Activated CD4-positive, alpha-beta memory T cell treated with anti-CD3 and anti-CD28 coated beads, Interleukin-2, amount 10 ng/mL, durations not matched to agents 7 days and 5 days (primary cell): ENCODE measurements at regions of chr15 and their contacts with region 1.

Region 1: DNA sequence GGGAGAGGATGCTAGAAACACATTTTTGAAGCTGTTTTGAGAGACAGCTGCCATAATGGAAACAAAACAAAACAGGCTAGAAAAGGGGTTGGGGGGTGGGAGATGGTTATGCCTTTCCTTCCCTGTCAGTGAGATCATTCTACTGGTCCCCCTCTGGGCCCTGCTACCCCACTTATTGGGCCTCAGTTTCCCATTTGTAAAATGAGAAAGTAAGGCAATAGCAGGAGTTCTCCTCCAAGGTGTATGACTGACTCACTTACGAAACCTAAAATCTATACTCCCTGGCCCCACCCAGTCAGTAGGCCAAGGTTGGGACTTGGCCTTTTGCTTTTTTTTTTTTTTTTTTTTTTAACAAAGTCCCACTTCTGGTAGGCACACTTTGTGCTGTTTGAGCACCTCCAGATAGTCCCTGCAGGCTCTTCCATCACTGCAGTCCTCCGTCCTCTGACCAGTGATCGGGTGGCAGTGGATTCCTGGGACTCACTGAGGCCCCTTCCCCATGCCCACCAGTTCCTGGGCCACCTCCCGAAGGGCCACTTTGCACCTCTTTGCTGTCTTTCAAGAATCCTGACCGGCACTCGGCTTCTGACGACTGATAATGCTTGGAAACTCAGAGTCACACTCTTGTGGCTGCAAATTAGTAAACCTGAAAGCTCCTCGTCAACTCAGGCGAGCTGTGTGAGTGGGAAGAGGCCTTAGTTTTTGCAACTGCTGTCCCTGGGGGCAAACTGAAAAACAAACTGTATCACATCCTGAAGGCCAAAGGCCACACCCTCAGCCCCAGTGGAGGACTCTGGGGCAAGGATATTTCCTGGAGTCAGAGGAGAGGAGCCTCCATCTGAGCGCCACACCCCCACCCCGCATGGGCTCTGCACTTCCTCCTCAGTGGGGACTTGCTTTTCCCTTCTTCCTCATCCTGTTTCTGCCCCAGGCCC is 6.7 kb upstream of the PSTPIP1 start:
- DNase-seq: peak; percentile 84
- H3K4me3 Mint-ChIP-seq: peak overlapping the region; percentile 52
- H3K27ac Mint-ChIP-seq: peak overlapping the region; percentile 99
- H3K4me1 Mint-ChIP-seq: peaks cover 69% of the 10 kb centered on the region
- H3K27me3 Mint-ChIP-seq: no peaks in the 10 kb centered on the region

Region 2: GRCh38 chr15:76973362-76973743 is 14.8 kb before region 1 on chr15:
- CTCF ChIA-PET with region 1: interaction called, 19 read pairs
- POLR2A ChIA-PET with region 1: interaction called, 107 read pairs
- DNase-seq: peak; percentile 71
- H3K4me3 Mint-ChIP-seq: no peak overlapping the region
- H3K27ac Mint-ChIP-seq: no peak overlapping the region
- H3K4me1 Mint-ChIP-seq: peaks cover 25% of the 10 kb centered on the region
- H3K27me3 Mint-ChIP-seq: peaks cover 1% of the 10 kb centered on the region

Region 3: DNA sequence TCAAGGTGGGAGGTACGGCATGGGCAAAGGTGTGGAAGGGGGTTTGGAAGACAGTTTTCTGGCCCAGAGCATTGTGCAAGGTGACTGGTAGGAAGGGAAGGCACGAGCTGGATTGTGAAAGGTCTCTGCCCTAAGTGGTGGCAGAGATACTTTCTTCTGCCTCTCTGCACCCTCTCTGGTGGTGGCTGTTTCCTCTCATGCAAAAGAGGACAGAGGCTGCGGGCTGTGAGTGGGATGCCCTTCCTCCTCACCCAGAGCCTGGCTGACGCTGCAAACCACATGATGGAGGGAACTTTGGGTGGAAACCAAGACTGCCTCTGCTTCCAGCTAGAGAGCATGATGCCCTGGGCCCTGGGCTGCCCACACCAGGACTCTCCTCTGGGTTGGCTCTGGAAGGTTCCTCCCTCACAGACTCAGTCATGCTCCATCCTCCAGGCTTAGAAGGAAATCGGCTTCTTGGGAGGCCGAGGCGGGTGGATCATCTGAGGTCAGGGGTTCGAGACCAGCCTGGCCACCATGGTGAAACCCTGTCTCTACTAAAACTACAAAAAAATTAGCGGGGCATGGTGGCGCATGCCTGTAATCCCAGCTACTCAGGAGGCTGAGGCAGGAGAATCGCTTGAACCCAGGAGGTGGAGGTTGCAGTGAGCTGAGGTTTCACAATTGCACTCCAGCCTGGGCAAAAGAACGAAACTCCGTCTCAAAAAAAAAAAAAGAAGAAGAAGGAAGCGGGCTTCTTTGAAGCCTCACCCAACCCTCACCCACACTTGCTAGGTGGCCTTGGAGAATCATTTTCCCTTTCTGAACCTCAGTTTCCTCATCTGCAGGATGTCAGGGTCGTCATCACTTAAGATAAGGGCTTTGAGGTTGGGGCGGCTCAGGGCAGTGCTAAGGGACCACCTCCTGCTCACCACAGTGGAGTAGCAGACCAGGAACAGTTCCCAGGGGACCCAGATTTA is 15.0 kb after region 1 on chr15:
- CTCF ChIA-PET with region 1: interaction called, 20 read pairs
- POLR2A ChIA-PET with region 1: interaction called, 61 read pairs
- DNase-seq: peak; percentile 87
- H3K4me3 Mint-ChIP-seq: peak overlapping the region; percentile 65
- H3K27ac Mint-ChIP-seq: peak overlapping the region; percentile 92
- H3K4me1 Mint-ChIP-seq: peaks cover 87% of the 10 kb centered on the region
- H3K27me3 Mint-ChIP-seq: no peaks in the 10 kb centered on the region

Region 4: DNA sequence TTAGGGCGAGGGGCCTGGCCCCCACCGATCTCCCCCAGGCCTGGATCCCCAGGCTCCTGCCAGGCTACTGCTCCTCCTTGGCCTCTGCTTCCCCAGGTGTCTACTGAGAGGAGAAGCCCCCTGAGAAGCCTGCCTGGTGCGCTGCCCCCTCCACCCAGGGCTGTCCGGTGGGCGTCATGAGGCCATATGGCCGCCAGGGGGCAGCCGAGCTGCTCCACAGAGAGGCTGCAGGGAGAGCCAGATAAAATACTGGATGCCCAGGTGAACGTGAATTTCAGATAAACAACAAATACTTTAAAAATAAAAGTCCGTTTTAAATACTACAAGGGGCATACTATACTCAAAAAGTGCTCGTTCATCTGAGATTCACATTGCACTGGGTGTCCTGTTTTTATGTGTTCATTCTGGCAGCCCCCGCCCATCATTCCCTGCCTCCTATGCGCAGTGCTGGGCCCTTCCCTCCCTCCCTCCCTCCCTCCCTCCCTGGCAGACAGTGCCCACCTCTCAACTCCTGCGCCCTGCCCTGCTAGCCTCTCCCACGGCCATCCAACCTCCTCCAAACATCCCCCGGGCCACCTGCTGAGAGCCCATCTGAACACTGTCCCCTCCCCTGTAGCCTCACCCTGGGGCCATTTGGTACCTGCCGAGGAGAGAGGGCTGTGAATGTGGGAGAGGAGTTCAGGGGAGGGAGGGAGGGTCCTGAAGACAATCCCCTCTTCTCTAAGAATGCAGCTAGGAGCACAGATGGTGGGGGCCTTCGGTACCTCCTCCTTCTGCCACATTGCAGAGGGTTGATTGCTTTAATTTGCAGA is 36.3 kb after region 1 on chr15:
- CTCF ChIA-PET with region 1: interaction called, 9 read pairs
- POLR2A ChIA-PET with region 1: interaction called, 23 read pairs
- DNase-seq: peak; percentile 66
- H3K4me3 Mint-ChIP-seq: no peak overlapping the region
- H3K27ac Mint-ChIP-seq: peak overlapping the region; percentile 70
- H3K4me1 Mint-ChIP-seq: peaks cover 57% of the 10 kb centered on the region
- H3K27me3 Mint-ChIP-seq: no peaks in the 10 kb centered on the region